Calu3 (cell line): ENCODE measurements at regions of chr6 and their contacts with region 1.

Region 1: GRCh38 chr6:52407467-52407866 is 12.7 kb upstream of the EFHC1 start:
- DNase-seq: peak; percentile 24
- H3K4me3 Mint-ChIP-seq: no peak overlapping the region
- H3K27ac Mint-ChIP-seq: no peak overlapping the region
- H3K4me1 Mint-ChIP-seq: peaks cover 14% of the 10 kb centered on the region
- H3K27me3 Mint-ChIP-seq: no peaks in the 10 kb centered on the region
- CTCF ChIP-seq: no peak

Region 2: GRCh38 chr6:53059648-53060589 is 652.5 kb after region 1 on chr6:
- CTCF ChIA-PET with region 1: no interaction called
- intact Hi-C with region 1: loop called (anchors 5 kb)
- DNase-seq: no peak
- H3K4me3 Mint-ChIP-seq: peak overlapping the region; percentile 89
- H3K27ac Mint-ChIP-seq: no peak overlapping the region
- H3K4me1 Mint-ChIP-seq: peaks cover 22% of the 10 kb centered on the region
- H3K27me3 Mint-ChIP-seq: no peaks in the 10 kb centered on the region
- CTCF ChIP-seq: no peak